MCF 10A (cell line): ENCODE measurements at regions of chr4 and their contacts with region 1.

Region 1: GRCh38 chr4:94451695-94452475 is at the start of gene PDLIM5:
- DNase-seq: peak; percentile 94
- H3K4me3 Mint-ChIP-seq: peak within 1 kb of the TSS; percentile 73
- H3K27ac Mint-ChIP-seq: peak within 1 kb of the TSS; percentile 85
- H3K4me1 Mint-ChIP-seq: peaks cover 31% of the 10 kb centered on the region
- H3K27me3 Mint-ChIP-seq: no peaks in the 10 kb centered on the region
- CTCF ChIP-seq: no peak
- total RNA-seq, gene PDLIM5: 151 and 158 TPM in 2 replicates

Region 2: DNA sequence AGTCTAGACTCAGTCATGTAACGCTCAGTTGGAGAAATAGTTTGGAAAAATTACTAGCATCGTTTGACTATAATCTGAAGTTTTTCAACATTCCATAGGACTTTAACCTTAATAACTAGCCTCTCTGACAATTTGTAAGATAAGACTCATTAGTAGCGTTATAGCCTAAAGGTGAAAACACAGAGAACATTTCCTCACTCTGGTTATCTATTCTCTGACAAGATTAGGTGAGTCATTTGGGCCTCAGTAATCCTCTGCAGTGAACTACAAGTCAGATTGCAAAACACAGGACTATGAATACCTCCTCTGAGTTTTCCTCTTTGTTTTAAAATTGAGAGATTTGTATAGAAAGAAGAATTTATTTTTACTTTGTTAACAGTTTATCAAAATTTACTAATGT is 31.9 kb before region 1 on chr4:
- CTCF ChIA-PET with region 1: no interaction called
- POLR2A ChIA-PET with region 1: interaction called, 288 read pairs
- intact Hi-C with region 1: no loop called
- DNase-seq: peak; percentile 85
- H3K4me3 Mint-ChIP-seq: peak overlapping the region; percentile 12
- H3K27ac Mint-ChIP-seq: no peak overlapping the region
- H3K4me1 Mint-ChIP-seq: peaks cover 13% of the 10 kb centered on the region
- H3K27me3 Mint-ChIP-seq: no peaks in the 10 kb centered on the region
- CTCF ChIP-seq: no peak

Region 3: GRCh38 chr4:94488662-94489061 is 36.8 kb after region 1 on chr4:
- CTCF ChIA-PET with region 1: interaction called, 4 read pairs
- POLR2A ChIA-PET with region 1: interaction called, 193 read pairs
- intact Hi-C with region 1: loop called (anchors 2 kb)
- DNase-seq: peak; percentile 91
- H3K4me3 Mint-ChIP-seq: peak overlapping the region; percentile 56
- H3K27ac Mint-ChIP-seq: peak overlapping the region; percentile 88
- H3K4me1 Mint-ChIP-seq: peaks cover 26% of the 10 kb centered on the region
- H3K27me3 Mint-ChIP-seq: no peaks in the 10 kb centered on the region
- CTCF ChIP-seq: no peak

Region 4: GRCh38 chr4:94531991-94532789 is 80.3 kb after region 1 on chr4:
- CTCF ChIA-PET with region 1: interaction called, 6 read pairs
- POLR2A ChIA-PET with region 1: interaction called, 32 read pairs
- intact Hi-C with region 1: loop called (anchors 1 kb)
- DNase-seq: peak; percentile 89
- H3K4me3 Mint-ChIP-seq: peak overlapping the region; percentile 32
- H3K27ac Mint-ChIP-seq: peak overlapping the region; percentile 2
- H3K4me1 Mint-ChIP-seq: peaks cover 33% of the 10 kb centered on the region
- H3K27me3 Mint-ChIP-seq: no peaks in the 10 kb centered on the region
- CTCF ChIP-seq: no peak

Region 5: GRCh38 chr4:94561249-94562024 is 109.6 kb after region 1 on chr4:
- CTCF ChIA-PET with region 1: no interaction called
- POLR2A ChIA-PET with region 1: interaction called, 30 read pairs
- intact Hi-C with region 1: no loop called
- DNase-seq: peak; percentile 48
- H3K4me3 Mint-ChIP-seq: no peak overlapping the region
- H3K27ac Mint-ChIP-seq: peak overlapping the region; percentile 13
- H3K4me1 Mint-ChIP-seq: peaks cover 26% of the 10 kb centered on the region
- H3K27me3 Mint-ChIP-seq: no peaks in the 10 kb centered on the region
- CTCF ChIP-seq: no peak

Region 6: GRCh38 chr4:94595879-94596483 is 144.1 kb after region 1 on chr4:
- CTCF ChIA-PET with region 1: interaction called, 3 read pairs
- POLR2A ChIA-PET with region 1: interaction called, 5 read pairs
- intact Hi-C with region 1: loop called (anchors 2 kb)
- DNase-seq: peak; percentile 63
- H3K4me3 Mint-ChIP-seq: no peak overlapping the region
- H3K27ac Mint-ChIP-seq: no peak overlapping the region
- H3K4me1 Mint-ChIP-seq: peaks cover 5% of the 10 kb centered on the region
- H3K27me3 Mint-ChIP-seq: no peaks in the 10 kb centered on the region
- CTCF ChIP-seq: peak; percentile 66